Endothelial cell of umbilical vein (primary cell): ENCODE measurements at regions of chr19 and their contacts with region 1.

Region 1: GRCh38 chr19:38402967-38403861 is at the start of gene FAM98C:
- DNase-seq: peak; percentile 97
- H3K4me3 ChIP-seq: peak within 1 kb of the TSS; percentile 65 to 79 (median 73)
- H3K27ac ChIP-seq: peak within 1 kb of the TSS; percentile 28
- H3K4me1 ChIP-seq: peaks cover 2% of the 10 kb centered on the region
- H3K27me3 ChIP-seq: no peaks in the 10 kb centered on the region
- CTCF ChIP-seq: peak; percentile 89 to 95
- POLR2A ChIP-seq: peak; percentile 36
- total RNA-seq, gene FAM98C: 13.0 and 15.4 TPM in 2 replicates

Region 2: DNA sequence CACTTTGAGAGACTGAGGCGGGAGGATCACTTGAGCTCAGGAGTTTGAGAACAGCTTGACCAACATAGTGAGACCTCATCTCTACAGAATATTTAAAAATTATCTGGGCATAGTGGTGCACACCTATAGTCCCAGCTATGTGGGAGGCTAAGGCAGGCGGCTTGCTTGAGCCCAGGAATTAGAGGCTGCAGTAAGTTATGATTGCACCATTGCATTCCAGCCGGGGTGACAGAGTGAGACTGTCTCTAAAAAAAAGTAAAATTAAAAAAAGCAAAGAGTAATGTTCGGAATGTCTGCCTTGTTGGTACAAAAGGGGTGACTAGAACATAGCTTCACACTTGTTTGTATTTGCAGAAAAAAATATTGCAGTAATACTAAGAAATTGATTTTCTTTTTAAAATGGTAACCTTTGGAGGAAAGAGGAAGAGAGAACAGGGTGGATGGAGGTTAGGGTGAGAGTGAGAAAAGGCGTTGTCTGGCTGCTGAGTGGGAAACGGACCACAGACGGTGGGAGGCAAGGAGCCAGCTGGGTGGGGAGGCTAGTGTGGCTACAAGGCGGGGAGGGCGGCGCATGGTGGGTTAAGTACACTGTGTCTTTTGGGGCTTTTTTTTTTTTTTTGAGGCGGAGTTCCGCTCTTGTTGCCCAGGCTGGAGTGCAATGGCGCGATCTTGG is 157.3 kb before region 1 on chr19:
- CTCF ChIA-PET with region 1: interaction called, 4 read pairs
- POLR2A ChIA-PET with region 1: no interaction called
- dilution Hi-C with region 1: no loop called
- intact Hi-C with region 1: loop called (anchors 5 kb)
- DNase-seq: no peak
- H3K4me3 ChIP-seq: no peak overlapping the region
- H3K27ac ChIP-seq: no peak overlapping the region
- H3K4me1 ChIP-seq: no peaks in the 10 kb centered on the region
- H3K27me3 ChIP-seq: no peaks in the 10 kb centered on the region
- CTCF ChIP-seq: no peak
- POLR2A ChIP-seq: no peak

Region 3: GRCh38 chr19:38387550-38388348 is 15.5 kb before region 1 on chr19 and contains the start of gene GGN:
- CTCF ChIA-PET with region 1: interaction called, 65 read pairs
- POLR2A ChIA-PET with region 1: interaction called, 11 read pairs
- dilution Hi-C with region 1: no loop called
- intact Hi-C with region 1: loop called (anchors 1 kb)
- DNase-seq: peak; percentile 98
- H3K4me3 ChIP-seq: peak within 1 kb of the TSS; percentile 78 to 96 (median 91)
- H3K27ac ChIP-seq: peak within 1 kb of the TSS; percentile 84
- H3K4me1 ChIP-seq: peaks cover 15% of the 10 kb centered on the region
- H3K27me3 ChIP-seq: no peaks in the 10 kb centered on the region
- CTCF ChIP-seq: no peak
- POLR2A ChIP-seq: peak; percentile 18
- total RNA-seq, gene GGN: 0.88 and 1.5 TPM in 2 replicates

Region 4: GRCh38 chr19:38514812-38515633 is 111.8 kb after region 1 on chr19:
- CTCF ChIA-PET with region 1: interaction called, 5 read pairs
- POLR2A ChIA-PET with region 1: interaction called, 4 read pairs
- dilution Hi-C with region 1: no loop called
- intact Hi-C with region 1: loop called (anchors 2 kb)
- DNase-seq: peak; percentile 52
- H3K4me3 ChIP-seq: no peak overlapping the region
- H3K27ac ChIP-seq: no peak overlapping the region
- H3K4me1 ChIP-seq: no peaks in the 10 kb centered on the region
- H3K27me3 ChIP-seq: no peaks in the 10 kb centered on the region
- CTCF ChIP-seq: peak; percentile 72 to 95
- POLR2A ChIP-seq: no peak

Region 5: GRCh38 chr19:38707512-38708114 is 304.4 kb after region 1 on chr19:
- CTCF ChIA-PET with region 1: interaction called, 3 read pairs
- POLR2A ChIA-PET with region 1: no interaction called
- dilution Hi-C with region 1: no loop called
- intact Hi-C with region 1: loop called (anchors 10 kb)
- DNase-seq: peak; percentile 91
- H3K4me3 ChIP-seq: no peak overlapping the region
- H3K27ac ChIP-seq: peak overlapping the region; percentile 47
- H3K4me1 ChIP-seq: peaks cover 30% of the 10 kb centered on the region
- H3K27me3 ChIP-seq: no peaks in the 10 kb centered on the region
- CTCF ChIP-seq: no peak
- POLR2A ChIP-seq: peak; percentile 70